GM10248 (cell line): ENCODE measurements at regions of chr2 and their contacts with region 1.

Region 1: GRCh38 chr2:9668722-9669340 is 38.0 kb upstream of the YWHAQ start:
- DNase-seq: no peak
- CTCF ChIP-seq: no peak

Region 2: GRCh38 chr2:9644603-9645002 is 24.2 kb before region 1 on chr2:
- CTCF ChIA-PET with region 1: no interaction called
- POLR2A ChIA-PET with region 1: no interaction called
- DNase-seq: no peak
- CTCF ChIP-seq: no peak

Region 3: DNA sequence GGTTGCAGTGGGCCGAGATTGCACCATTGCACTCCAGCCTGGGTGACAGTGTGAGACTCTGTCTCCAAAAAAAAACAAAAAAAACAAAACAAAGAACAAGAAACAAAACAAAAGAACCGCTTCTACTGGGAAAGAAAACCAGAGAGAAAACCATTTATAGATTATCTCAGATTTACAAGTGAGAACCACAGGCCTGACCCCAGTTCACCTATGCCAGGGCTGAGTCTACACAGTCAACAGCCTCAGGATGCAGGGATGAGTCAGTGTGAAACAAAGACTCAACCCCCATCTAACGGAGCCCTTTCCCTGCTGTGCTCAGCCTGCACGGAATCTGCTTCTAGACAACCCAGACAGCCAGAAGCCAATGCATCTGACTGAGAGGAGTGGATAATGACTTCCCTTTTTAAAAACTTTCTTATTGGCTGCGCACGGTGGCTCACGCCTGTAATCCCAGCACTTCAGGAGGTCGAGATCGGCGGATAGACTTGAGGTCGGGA is 12.5 kb before region 1 on chr2:
- CTCF ChIA-PET with region 1: interaction called, 11 read pairs
- POLR2A ChIA-PET with region 1: no interaction called
- DNase-seq: peak; percentile 84
- CTCF ChIP-seq: no peak